ENCODE measurements at regions of chr1 and their contacts with region 1.

Region 1: DNA sequence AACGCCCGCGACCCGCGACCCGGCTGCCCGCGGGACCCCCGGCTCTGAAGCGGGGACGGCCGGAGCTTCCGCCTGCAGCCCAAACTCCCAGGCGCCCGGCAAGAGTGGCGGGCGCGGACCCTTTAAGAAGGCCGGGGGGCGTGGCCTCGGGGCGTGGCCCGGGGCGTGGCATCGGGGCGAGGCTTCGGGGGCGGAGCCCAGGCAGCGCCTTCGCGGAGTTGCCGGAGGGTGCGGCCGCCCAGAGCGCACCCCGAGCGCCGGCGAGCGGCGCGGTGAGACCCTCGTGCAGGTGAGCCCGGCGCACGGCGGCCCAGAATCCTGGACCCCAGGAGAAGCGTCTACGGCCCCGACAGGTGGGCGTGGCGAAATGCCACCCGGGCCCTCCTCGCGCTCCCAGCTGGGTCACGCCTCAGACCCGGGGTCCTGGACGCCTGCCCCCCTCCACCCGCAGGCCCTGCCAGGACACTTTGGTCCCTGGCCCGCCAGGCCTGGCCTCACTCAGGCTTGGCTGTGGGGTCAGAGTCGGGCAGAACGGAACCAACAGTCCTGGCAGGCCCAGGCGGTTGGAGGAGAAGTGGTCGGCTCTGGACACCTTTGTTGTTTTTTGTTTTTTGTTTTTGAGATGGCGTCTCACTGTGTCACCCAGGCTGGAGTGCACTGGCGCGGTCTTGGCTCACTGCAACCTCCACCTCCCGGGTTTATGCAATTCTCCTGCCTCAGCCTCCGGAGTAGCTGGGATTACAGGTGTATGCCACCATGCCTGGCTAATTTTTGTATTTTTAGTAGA is 14.4 kb downstream of the RNF223 start:
- DNase-seq: peak; percentile 66
- ATAC-seq: peak; percentile 58
- H3K4me3 ChIP-seq: peak overlapping the region; percentile 77 to 96 (median 87)
- H3K27ac ChIP-seq: no peak overlapping the region
- H3K4me1 ChIP-seq: peaks cover 45% of the 10 kb centered on the region
- H3K27me3 ChIP-seq: no peaks in the 10 kb centered on the region
- CTCF ChIP-seq: no peak; the same call in 1 of the 2 replicates
- EP300 ChIP-seq: no peak
- POLR2A ChIP-seq: no peak
- RAD21 ChIP-seq: peak; percentile 23; the same call in 1 of the 2 replicates

Region 2: DNA sequence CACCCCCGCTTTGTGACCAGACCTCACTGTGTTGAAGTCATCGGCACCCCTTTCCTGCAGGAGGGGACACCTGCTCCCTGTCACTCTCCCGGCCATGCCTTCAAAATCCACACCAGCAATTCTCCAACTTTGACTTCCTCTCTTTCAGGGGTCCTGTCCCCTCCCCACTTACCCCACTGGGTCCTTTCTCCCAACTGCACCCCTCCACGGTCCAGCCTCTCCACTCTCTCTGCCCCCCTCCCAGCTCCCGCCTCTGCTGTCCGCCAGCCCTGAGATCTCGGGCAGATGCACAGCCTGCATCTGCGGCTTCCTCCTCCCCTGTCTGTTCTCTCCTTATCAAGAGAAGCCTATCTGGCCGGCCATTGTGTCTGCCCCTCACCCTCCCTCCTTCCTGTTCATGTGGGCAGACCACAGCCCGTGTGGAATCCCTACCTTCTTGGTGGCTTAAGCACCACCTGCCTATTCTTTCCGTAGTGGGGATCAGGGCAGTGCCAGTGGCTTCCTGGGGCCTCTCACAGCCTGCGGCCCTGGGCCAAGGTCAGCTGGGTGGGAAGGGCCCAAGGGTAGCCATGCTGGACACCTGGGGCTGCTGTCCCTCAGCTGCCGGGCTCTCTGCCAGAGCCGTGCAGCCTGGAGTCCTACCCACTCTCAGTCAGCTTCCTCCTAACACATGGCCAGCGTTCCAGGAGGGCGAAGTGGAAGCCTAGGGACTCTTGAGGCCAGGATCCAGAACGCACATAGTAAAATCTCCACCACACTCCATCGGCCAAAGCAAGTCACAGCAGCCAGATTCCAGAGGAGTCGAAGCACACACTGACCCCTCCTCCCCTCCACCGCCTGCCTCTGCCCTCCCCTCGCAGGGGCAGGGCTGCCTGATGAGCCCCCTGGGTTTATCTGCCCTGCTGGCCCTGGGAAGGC is 54.6 kb before region 1 on chr1:
- CTCF ChIA-PET with region 1: no interaction called
- POLR2A ChIA-PET with region 1: interaction called, 10 read pairs
- in situ Hi-C with region 1: no loop called
- intact Hi-C with region 1: loop called (anchors 5 kb)
- DNase-seq: no peak
- ATAC-seq: peak; percentile 45
- H3K4me3 ChIP-seq: peak overlapping the region; percentile 56 to 77 (median 70)
- H3K27ac ChIP-seq: peak overlapping the region; percentile 88
- H3K4me1 ChIP-seq: peaks cover 54% of the 10 kb centered on the region
- H3K27me3 ChIP-seq: no peaks in the 10 kb centered on the region
- CTCF ChIP-seq: no peak; the same call in 1 of the 2 replicates
- EP300 ChIP-seq: 0 out of 4 replicates have a peak, but pooled peaks of 1 of the 2 experiments have one; percentile 6
- POLR2A ChIP-seq: 0 out of 4 replicates have a peak, but pooled peaks of 1 of the 2 experiments have one; percentile 31
- RAD21 ChIP-seq: 0 out of 2 replicates have a peak, but pooled peaks have one; percentile 38

Region 3: DNA sequence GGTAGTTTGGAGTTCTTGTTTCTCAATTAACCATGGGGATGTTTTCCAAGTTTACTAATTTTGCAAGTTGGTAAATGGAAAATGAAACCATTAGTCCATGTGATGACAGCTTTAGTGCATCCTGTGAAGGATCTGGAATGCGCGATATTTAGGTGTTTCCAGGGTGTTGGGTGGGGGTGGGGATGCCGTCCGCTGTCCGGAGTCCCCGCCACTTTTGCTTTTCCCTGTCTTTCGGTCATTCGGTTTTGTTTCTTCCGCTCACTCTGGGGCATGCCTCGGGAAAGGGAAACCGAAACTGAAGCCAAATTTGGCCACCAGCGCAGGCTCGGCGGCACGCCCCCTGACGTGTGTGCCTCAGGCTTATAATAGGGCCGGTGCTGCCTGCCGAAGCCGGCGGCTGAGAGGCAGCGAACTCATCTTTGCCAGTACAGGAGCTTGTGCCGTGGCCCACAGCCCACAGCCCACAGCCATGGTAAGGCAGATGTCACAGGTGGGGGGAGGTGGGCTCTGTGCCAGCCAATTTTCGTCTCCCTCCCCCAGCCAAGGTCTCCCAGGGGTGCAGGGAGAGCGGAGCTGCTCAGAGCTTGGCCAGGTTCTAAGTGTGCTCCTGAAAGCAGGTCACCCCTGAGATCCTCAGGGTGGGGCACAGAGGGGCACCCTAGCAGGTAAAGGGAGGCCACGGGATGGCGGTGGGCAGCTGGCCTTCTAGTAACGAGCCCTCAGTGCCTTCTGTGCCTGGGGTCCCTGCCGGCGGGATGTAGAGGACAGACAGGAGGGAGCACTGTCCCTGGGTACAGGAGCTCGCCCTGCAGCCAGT is 46.4 kb before region 1 on chr1 and contains the start of gene ISG15:
- CTCF ChIA-PET with region 1: interaction called, 15 read pairs
- POLR2A ChIA-PET with region 1: interaction called, 20 read pairs
- in situ Hi-C with region 1: no loop called
- intact Hi-C with region 1: loop called (anchors 5 kb)
- DNase-seq: peak; percentile 73
- ATAC-seq: peak; percentile 87
- H3K4me3 ChIP-seq: peak within 1 kb of the TSS; percentile 69 to 98 (median 86)
- H3K27ac ChIP-seq: peak within 1 kb of the TSS; percentile 60
- H3K4me1 ChIP-seq: peaks cover 43% of the 10 kb centered on the region
- H3K27me3 ChIP-seq: no peaks in the 10 kb centered on the region; a peak in 1 of 5 replicates
- CTCF ChIP-seq: peak; percentile 30; the same call in 1 of the 2 replicates
- EP300 ChIP-seq: no peak
- POLR2A ChIP-seq: no peak
- RAD21 ChIP-seq: no peak
- total RNA-seq, gene ISG15: 54.9 and 68.4 TPM in 2 replicates

Region 4: DNA sequence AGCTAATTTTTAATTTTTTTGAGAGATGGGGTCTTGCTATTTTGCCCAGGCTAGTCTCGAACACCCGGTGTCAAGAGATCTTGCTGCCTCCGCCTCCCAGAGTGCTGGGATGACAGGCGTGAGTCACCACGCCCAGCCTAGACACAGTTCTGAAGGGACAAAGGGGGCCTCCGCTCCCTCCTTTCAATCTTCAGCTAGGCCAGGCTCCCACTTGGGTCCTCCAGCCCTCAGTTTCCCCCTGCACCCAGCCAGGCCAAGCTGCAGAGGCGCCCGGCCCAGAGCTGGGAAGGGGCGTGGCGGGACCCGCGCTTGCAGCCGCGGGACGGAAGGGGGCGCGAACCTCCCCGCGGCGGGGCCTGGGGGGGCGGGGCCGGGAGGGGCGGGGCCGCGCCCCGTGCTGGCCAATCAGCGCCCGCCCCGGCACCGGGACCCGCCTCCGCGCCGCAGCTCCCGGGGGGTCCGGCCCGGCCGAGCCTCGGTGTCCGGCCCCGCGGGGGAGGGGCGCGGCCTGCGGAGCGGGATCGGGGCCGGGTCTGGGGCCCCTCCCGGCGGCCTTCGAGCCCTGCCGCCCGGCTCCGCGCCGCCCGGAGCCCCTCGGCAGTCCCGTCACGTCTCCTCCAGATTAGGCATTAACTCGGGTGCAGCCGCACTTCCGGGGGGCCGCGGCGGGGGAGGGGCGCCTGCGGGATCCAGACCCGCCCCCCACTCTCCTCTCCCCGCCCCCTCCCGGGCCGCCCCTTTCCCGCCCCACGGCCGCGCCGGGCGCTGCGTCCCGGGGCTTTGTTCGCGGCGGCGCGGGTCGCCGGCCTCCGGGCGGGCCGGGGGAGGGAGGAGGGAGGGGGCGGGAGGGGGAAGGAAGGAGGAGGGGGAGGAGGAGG is 40.3 kb before region 1 on chr1:
- CTCF ChIA-PET with region 1: interaction called, 15 read pairs
- POLR2A ChIA-PET with region 1: interaction called, 20 read pairs
- in situ Hi-C with region 1: loop called (anchors 5 kb)
- intact Hi-C with region 1: loop called (anchors 5 kb)
- DNase-seq: peak; percentile 88
- ATAC-seq: peak; percentile 74
- H3K4me3 ChIP-seq: peak overlapping the region in 2 of 3 experiments; percentile 28 to 55; a peak in 3 of 6 replicates
- H3K27ac ChIP-seq: peak overlapping the region; percentile 50
- H3K4me1 ChIP-seq: peaks cover 82% of the 10 kb centered on the region
- H3K27me3 ChIP-seq: no peaks in the 10 kb centered on the region
- CTCF ChIP-seq: peak; percentile 67
- EP300 ChIP-seq: peak in 1 of 2 experiments; percentile 51; a peak in 1 of 4 replicates
- POLR2A ChIP-seq: no peak
- RAD21 ChIP-seq: no peak; the same call in 1 of the 2 replicates

Region 5: GRCh38 chr1:1079408-1080121 is 19.9 kb after region 1 on chr1:
- CTCF ChIA-PET with region 1: no interaction called
- POLR2A ChIA-PET with region 1: interaction called, 11 read pairs
- in situ Hi-C with region 1: no loop called
- intact Hi-C with region 1: no loop called
- DNase-seq: peak; percentile 79
- ATAC-seq: peak; percentile 82
- H3K4me3 ChIP-seq: peak overlapping the region; percentile 28 to 64 (median 37); a peak in 5 of 6 replicates
- H3K27ac ChIP-seq: peak overlapping the region; percentile 8
- H3K4me1 ChIP-seq: peaks cover 14% of the 10 kb centered on the region
- H3K27me3 ChIP-seq: peaks cover 7 to 12% of the 10 kb centered on the region in 2 experiments; a peak in 4 of 5 replicates
- CTCF ChIP-seq: no peak
- EP300 ChIP-seq: no peak
- POLR2A ChIP-seq: peak in 1 of 2 experiments; percentile 31; a peak in 1 of 4 replicates
- RAD21 ChIP-seq: no peak

Region 6: DNA sequence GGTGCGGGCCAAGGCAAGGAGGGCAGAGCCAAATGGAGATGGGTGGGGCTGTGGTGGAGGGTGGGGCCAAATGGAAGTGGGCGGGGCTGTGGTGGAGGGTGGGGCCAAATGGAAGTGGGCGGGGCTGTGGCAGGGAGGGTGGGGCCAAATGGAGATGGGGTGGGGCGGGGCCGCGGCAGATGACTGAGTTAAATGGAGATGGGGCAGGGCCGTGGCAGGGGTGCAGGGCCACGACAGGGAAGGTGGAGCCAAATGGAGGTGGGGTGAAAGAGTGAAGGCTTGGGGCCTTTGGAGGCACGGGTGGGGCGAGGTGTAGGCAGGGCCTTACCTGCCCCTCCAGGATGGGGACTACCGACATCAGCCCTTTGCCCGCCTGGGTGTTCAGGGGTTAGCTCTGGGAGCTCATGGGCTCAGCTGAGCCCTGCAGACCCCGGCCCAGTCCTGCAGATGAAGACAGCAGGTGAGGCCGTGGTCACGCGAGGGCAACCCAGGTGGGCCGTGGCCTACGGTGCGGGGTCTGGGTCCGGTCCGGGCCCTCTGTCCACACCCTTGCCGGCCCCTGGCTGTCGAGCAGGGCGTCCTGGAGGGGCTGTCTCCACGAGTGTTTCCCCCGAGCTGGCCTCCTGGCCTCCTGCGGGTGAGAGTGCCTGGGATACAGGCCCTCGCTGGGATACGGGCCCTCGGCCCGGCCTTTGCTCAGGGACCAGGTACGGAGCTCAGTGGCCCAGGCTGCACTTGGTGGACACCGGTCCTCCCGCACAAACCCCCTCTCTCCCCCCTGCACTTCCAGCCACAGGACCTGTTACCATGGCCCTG is 32.2 kb after region 1 on chr1:
- CTCF ChIA-PET with region 1: no interaction called
- POLR2A ChIA-PET with region 1: no interaction called
- in situ Hi-C with region 1: no loop called
- intact Hi-C with region 1: no loop called
- DNase-seq: no peak
- ATAC-seq: no peak
- H3K4me3 ChIP-seq: no peak overlapping the region
- H3K27ac ChIP-seq: no peak overlapping the region
- H3K4me1 ChIP-seq: peaks cover under 1% of the 10 kb centered on the region; the same call in 1 of the 2 replicates
- H3K27me3 ChIP-seq: no peaks in the 10 kb centered on the region; a peak in 1 of 5 replicates
- CTCF ChIP-seq: no peak
- EP300 ChIP-seq: no peak
- POLR2A ChIP-seq: no peak
- RAD21 ChIP-seq: no peak